ENCODE measurements at regions of chr1 and their contacts with region 1.

Region 1: GRCh38 chr1:203172128-203173010 is 3.3 kb downstream of the MYBPH start:
- DNase-seq: peak; percentile 29 to 50 (median 45)
- H3K4me3 ChIP-seq: no peak overlapping the region
- H3K4me3 Mint-ChIP-seq: peak overlapping the region in 1 of 2 donors; percentile 15
- H3K27ac ChIP-seq: no peak overlapping the region
- H3K27ac Mint-ChIP-seq: peak overlapping the region in 2 of 7 donors; percentile 8 to 23
- H3K4me1 ChIP-seq: peaks cover 30 to 31% of the 10 kb centered on the region in 2 donors
- H3K4me1 Mint-ChIP-seq: peaks cover 41% of the 10 kb centered on the region
- H3K27me3 ChIP-seq: no peaks in the 10 kb centered on the region
- H3K27me3 Mint-ChIP-seq: peaks cover 9 to 15% (median 11%) of the 10 kb centered on the region in 3 donors
- CTCF ChIP-seq: peak; percentile 98

Region 2: DNA sequence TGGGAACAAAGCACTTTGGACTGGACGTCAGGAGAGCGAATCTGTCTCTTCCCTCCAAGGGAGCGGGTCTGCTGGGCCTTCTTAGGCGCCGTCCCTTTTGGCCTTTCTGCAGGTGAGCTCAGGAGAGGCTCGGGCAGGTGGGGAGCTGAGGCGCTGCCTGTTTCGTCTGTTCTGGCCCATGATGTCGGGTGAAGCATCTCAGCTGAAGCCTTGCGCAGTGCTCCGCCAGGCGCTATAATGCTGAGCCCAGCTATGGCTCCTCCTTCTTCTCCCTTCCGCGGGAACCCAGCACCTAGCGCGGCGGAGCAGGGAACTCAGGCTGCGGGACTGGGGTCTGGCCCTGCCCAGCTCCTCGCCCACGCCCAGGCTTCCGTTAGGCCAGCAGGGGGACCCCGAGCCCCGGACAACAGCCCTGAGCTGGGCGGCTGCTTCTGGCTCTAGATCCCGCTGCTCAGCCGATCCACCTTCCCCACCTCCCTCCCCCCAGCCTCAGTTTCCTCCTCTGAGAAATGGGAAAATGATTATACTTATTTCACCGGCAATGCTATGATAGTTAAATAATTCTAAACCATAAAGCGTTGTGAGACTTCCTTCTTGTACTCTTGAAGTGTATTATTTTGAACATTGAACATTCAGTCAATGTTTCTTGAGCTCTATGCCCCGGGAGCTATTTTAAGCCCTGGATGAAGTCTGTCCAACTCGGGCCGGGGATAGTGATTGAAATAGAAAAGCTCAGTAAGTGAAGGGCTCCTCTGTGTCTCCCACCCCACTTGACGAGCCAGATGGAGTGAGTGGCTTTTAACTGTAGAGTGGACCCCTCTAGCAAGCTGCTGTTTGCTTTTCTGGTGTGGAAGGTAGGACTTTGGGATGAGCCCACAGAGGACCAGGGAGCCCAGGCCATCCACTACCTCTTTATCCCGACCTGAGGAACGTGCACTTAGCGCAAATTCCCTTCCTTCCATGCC is 54.5 kb before region 1 on chr1:
- intact Hi-C with region 1: loop called in 1 of 2 experiments (anchors 5 kb)
- DNase-seq: peak; percentile 32 to 62 (median 55)
- H3K4me3 ChIP-seq: no peak overlapping the region
- H3K4me3 Mint-ChIP-seq: peak overlapping the region in 1 of 2 donors; percentile 76
- H3K27ac ChIP-seq: no peak overlapping the region
- H3K27ac Mint-ChIP-seq: peak overlapping the region in 1 of 7 donors; percentile 42
- H3K4me1 ChIP-seq: peaks cover 6 to 10% of the 10 kb centered on the region in 2 donors
- H3K4me1 Mint-ChIP-seq: peaks cover 11% of the 10 kb centered on the region
- H3K27me3 ChIP-seq: peaks cover 27 to 83% of the 10 kb centered on the region in 2 donors
- H3K27me3 Mint-ChIP-seq: peaks cover 46 to 68% (median 66%) of the 10 kb centered on the region in 3 donors
- CTCF ChIP-seq: peak; percentile 87